Right cardiac atrium (tissue), 5 donors: ENCODE measurements at regions of chr2 and their contacts with region 1.

Region 1: GRCh38 chr2:107984707-107985106 is 1.6 kb upstream of the SLC5A7 start:
- DNase-seq: no peak
- ATAC-seq: no peak
- H3K4me3 ChIP-seq: no peak overlapping the region
- H3K27ac ChIP-seq: no peak overlapping the region
- H3K4me1 ChIP-seq: no peaks in the 10 kb centered on the region
- H3K27me3 ChIP-seq: no peaks in the 10 kb centered on the region

Region 2: DNA sequence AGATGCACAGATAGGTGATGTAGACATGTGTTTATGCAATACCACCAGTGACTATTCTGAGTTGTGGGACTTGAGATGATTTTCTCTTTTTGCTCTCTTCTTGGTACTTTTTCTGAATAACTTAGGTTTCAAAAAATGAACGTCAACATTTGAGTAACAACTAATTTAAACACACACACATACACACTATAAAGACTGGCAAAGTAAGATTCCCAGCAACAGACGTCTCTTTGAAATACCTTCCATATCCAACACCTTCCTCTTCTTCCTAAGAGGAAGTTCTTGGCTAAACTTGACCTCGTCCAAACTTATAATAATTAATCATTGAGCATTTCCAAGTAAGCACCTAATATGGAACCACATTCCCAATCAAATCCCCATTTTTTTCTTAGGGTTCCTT is 239.6 kb before region 1 on chr2:
- intact Hi-C with region 1: loop called in 1 of 4 experiments (anchors 5 kb)
- DNase-seq: no peak
- ATAC-seq: no peak
- H3K4me3 ChIP-seq: no peak overlapping the region
- H3K27ac ChIP-seq: no peak overlapping the region
- H3K4me1 ChIP-seq: no peaks in the 10 kb centered on the region
- H3K27me3 ChIP-seq: no peaks in the 10 kb centered on the region